Aorta (tissue), 5 donors: ENCODE measurements at regions of chr12 and their contacts with region 1.

Region 1: GRCh38 chr12:75480469-75480949 is at the start of gene GLIPR1:
- DNase-seq: peak; percentile 88 to 93
- ATAC-seq: peak; percentile 94
- H3K4me3 ChIP-seq: peak within 1 kb of the TSS; percentile 99 to 100
- H3K27ac ChIP-seq: peak within 1 kb of the TSS; percentile 96 to 97
- H3K4me1 ChIP-seq: no peaks in the 10 kb centered on the region
- H3K27me3 ChIP-seq: no peaks in the 10 kb centered on the region
- total RNA-seq, gene GLIPR1: 152 to 230 TPM

Region 2: GRCh38 chr12:75334384-75335030 is 146.0 kb before region 1 on chr12 and contains the start of gene GLIPR1L1:
- intact Hi-C with region 1: loop called (anchors 2 to 5 kb)
- DNase-seq: peak; percentile 91 to 93
- ATAC-seq: peak; percentile 92
- H3K4me3 ChIP-seq: peak within 1 kb of the TSS; percentile 6 to 61
- H3K27ac ChIP-seq: peak within 1 kb of the TSS in 1 of 2 donors; percentile 10
- H3K4me1 ChIP-seq: no peaks in the 10 kb centered on the region
- H3K27me3 ChIP-seq: no peaks in the 10 kb centered on the region
- total RNA-seq, gene GLIPR1L1: not detected

Region 3: GRCh38 chr12:75345531-75345930 is 135.0 kb before region 1 on chr12:
- intact Hi-C with region 1: no loop called
- DNase-seq: no peak
- ATAC-seq: no peak
- H3K4me3 ChIP-seq: no peak overlapping the region
- H3K27ac ChIP-seq: no peak overlapping the region
- H3K4me1 ChIP-seq: no peaks in the 10 kb centered on the region
- H3K27me3 ChIP-seq: no peaks in the 10 kb centered on the region

Region 4: GRCh38 chr12:75390899-75391538 is 89.5 kb before region 1 on chr12 and contains the start of gene GLIPR1L2:
- intact Hi-C with region 1: loop called (anchors 1 to 2 kb)
- DNase-seq: peak; percentile 97 to 98
- ATAC-seq: peak; percentile 100
- H3K4me3 ChIP-seq: peak within 1 kb of the TSS; percentile 62 to 64
- H3K27ac ChIP-seq: peak within 1 kb of the TSS; percentile 57 to 76
- H3K4me1 ChIP-seq: no peaks in the 10 kb centered on the region
- H3K27me3 ChIP-seq: no peaks in the 10 kb centered on the region
- total RNA-seq, gene GLIPR1L2: 0.94 to 1.9 TPM

Region 5: DNA sequence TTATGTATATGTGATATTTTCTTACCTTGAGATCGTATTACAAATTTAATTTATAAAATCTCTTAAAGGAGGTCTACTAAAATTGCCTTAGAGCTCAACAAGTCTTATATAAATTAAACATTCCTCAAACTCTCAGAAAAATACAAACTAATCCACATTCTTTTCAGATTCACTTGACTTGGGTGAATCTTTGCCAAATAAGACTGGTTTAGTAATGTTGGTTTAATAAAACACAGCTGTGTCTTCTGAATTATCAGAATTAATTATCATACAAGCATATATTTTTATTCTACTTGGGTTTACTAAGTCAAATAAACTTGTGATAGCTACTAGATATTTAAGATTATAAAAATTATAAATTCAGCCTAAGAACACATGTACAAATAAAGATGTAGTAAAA is 76.3 kb before region 1 on chr12:
- intact Hi-C with region 1: loop called in 1 of 2 experiments (anchors 2 kb)
- DNase-seq: no peak
- ATAC-seq: no peak
- H3K4me3 ChIP-seq: no peak overlapping the region
- H3K27ac ChIP-seq: no peak overlapping the region
- H3K4me1 ChIP-seq: no peaks in the 10 kb centered on the region
- H3K27me3 ChIP-seq: no peaks in the 10 kb centered on the region

Region 6: GRCh38 chr12:75447691-75448393 is 32.7 kb before region 1 on chr12:
- intact Hi-C with region 1: loop called in 1 of 2 experiments (anchors 2 kb)
- DNase-seq: no peak
- ATAC-seq: no peak
- H3K4me3 ChIP-seq: no peak overlapping the region
- H3K27ac ChIP-seq: no peak overlapping the region
- H3K4me1 ChIP-seq: no peaks in the 10 kb centered on the region
- H3K27me3 ChIP-seq: no peaks in the 10 kb centered on the region